ENCODE measurements at regions of chr2 and their contacts with region 1.

Region 1: DNA sequence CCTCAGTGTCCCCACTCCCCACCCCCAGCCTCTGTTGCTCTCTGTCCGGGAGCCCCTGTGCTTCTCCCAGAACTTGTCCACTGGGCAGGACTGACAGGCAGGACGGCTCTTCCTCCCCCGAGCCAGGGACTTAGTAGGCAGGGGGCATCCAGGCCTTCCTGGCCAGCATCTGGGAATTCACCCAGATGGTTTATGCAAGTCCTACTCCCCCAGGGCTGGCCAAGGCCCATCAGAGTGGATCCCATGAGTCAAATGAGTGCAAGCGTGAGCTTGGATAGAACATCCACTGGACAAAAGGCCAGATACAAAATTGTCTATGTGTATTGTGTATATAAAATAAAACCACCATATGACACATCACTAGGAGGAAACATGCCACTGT is 7.5 kb downstream of the NMUR1 start:
- DNase-seq: no peak
- ATAC-seq: no peak
- H3K4me3 Mint-ChIP-seq: no peak overlapping the region
- H3K27ac Mint-ChIP-seq: no peak overlapping the region
- H3K4me1 Mint-ChIP-seq: peaks cover 35% of the 10 kb centered on the region
- H3K27me3 Mint-ChIP-seq: peaks cover 48% of the 10 kb centered on the region

Region 2: GRCh38 chr2:231410293-231411004 is 112.3 kb before region 1 on chr2:
- POLR2A ChIA-PET with region 1: no interaction called
- DNase-seq: no peak
- ATAC-seq: no peak
- H3K4me3 Mint-ChIP-seq: no peak overlapping the region
- H3K27ac Mint-ChIP-seq: no peak overlapping the region
- H3K4me1 Mint-ChIP-seq: peaks cover 14% of the 10 kb centered on the region
- H3K27me3 Mint-ChIP-seq: peaks cover 42% of the 10 kb centered on the region

Region 3: GRCh38 chr2:231545105-231545902 is 22.5 kb after region 1 on chr2:
- POLR2A ChIA-PET with region 1: interaction called, 23 read pairs
- DNase-seq: peak; percentile 64
- ATAC-seq: peak; percentile 92
- H3K4me3 Mint-ChIP-seq: peak overlapping the region; percentile 72
- H3K27ac Mint-ChIP-seq: peak overlapping the region; percentile 94
- H3K4me1 Mint-ChIP-seq: peaks cover 36% of the 10 kb centered on the region
- H3K27me3 Mint-ChIP-seq: peaks cover 12% of the 10 kb centered on the region

Measured in activated naive CD8-positive, alpha-beta T cell treated with anti-CD3 and anti-CD28 coated beads, Interleukin-2, amount 10 ng/mL, durations not matched to agents 7 days and 5 days (primary cell).